Common myeloid progenitor, CD34-positive (primary cell): ENCODE measurements at regions of chr14 and their contacts with region 1.

Region 1: DNA sequence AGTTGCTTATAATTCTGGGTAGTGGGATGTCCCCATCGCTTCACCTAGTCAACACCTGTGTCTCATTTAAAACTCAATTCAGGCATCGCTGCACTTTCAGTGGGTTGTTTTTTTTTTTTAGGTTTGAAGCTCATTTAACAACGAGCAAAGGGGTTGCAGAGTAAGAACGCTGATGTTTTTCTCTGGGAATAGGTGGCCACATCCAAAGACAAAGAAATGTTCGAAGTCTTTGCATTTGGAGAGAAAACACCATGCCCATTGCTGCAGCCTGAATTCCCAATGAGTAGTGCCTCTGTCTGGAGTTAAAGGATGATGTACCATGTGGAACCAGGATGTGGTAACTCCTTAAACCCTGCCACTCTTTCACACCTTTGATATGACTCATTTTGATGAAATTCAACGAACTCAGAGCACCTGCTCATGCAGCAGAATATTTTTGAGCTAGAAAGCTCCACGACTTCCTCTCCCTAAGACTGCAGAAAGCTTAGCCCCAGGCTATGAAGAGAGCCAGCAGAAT is 35.1 kb upstream of the BATF start:
- DNase-seq: peak in 2 of 3 donors; percentile 27 to 39
- H3K4me3 ChIP-seq: no peak overlapping the region
- H3K27ac ChIP-seq: no peak overlapping the region
- H3K4me1 ChIP-seq: no peaks in the 10 kb centered on the region
- H3K27me3 ChIP-seq: no peaks in the 10 kb centered on the region

Region 2: DNA sequence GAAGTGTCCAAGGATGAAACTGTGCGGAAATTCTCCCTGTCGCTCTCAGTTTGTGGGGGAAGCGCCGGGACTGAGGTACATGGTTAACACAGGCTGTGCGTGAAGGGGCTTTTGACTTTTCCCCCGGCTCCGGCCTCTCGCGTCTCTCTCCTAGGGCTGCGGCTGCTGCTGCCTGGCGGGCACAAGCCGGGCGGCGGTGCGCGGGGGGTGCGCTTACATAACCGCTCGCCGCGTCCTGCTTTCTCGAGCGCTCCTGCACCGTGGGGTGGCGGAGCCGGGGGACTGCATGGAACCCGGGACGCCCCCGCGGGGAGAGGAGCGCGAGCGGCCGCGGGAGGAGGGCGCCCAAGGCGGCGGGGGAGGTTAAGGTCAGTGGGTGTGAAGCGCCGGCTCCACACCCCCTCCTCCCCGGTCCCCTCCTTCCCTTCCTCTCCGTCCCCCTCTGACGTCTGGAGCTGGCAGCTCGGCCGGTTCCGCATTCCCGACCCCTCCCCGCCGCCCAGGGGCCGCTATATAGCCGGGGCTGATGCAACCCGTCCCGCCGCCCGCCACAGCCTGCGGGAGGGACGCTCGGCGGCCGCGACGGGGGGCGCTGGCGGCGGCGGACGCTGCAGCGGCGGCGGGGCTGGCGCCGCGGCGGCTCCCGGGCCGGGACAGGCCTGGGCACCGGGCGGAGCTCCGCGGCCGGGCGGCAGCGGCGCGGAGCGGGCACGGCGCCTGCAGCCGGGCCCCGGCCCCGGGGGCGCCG is 59.6 kb before region 1 on chr14 and contains the start of gene JDP2:
- CTCF ChIA-PET with region 1: interaction called, 14 read pairs
- POLR2A ChIA-PET with region 1: no interaction called
- DNase-seq: peak; percentile 81 to 91 (median 90)
- H3K4me3 ChIP-seq: peak within 1 kb of the TSS; percentile 67 to 81 (median 74)
- H3K27ac ChIP-seq: peak within 1 kb of the TSS in 1 of 2 experiments; percentile 23
- H3K4me1 ChIP-seq: peaks cover 0 to 56% (median 32%) of the 10 kb centered on the region in 4 experiments
- H3K27me3 ChIP-seq: no peaks in the 10 kb centered on the region

Region 3: DNA sequence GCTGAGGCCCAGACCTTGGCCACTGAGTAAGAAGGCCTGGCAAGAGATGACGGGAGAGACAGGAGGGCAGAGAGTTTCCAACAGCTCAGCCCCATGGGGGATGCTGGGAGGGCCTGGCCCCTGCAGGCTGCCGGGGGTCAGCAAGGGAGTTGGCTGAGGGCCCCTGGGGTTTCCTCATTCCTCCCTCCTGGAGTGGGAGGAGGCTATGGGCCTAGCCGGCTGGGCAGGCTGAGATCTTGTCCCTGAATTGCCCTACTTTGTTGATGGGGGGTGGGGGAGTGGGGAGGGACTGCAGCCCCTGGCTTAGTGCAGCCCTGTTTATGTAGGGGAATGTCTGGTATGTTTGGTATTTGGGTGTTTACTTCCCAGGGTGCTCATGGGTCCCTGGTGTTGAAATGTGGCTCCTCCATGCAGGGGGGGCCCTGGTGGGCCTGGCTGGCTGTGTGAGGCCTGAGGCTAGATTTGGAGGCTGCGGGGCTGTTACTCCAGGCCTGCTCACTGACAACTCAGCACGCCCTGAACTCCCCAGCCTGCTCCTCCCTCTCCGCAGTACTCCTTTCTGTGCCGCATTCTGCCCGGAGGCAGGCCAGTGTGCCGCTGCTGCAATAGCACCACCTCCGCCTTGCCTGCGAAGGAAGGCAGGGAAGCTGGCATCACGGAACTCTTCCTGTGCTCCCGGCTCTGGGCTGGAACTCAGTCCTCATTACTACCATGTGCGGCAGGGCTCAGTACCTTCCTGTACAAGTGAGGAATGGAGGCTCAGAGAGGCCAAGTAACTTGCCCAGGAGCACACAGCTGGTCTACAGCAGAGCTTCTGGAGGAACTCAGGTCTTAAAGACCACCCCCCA is 34.1 kb before region 1 on chr14:
- CTCF ChIA-PET with region 1: interaction called, 17 read pairs
- POLR2A ChIA-PET with region 1: no interaction called
- DNase-seq: no peak
- H3K4me3 ChIP-seq: no peak overlapping the region
- H3K27ac ChIP-seq: no peak overlapping the region
- H3K4me1 ChIP-seq: peaks cover 4 to 83% (median 55%) of the 10 kb centered on the region in 4 experiments
- H3K27me3 ChIP-seq: no peaks in the 10 kb centered on the region

Region 4: GRCh38 chr14:75514673-75515628 is 27.7 kb after region 1 on chr14:
- CTCF ChIA-PET with region 1: interaction called, 14 read pairs
- POLR2A ChIA-PET with region 1: no interaction called
- DNase-seq: peak; percentile 67 to 91 (median 89)
- H3K4me3 ChIP-seq: peak overlapping the region in 6 of 7 experiments; percentile 17 to 65 (median 50)
- H3K27ac ChIP-seq: peak overlapping the region in 1 of 2 experiments; percentile 36
- H3K4me1 ChIP-seq: peaks cover 10 to 27% (median 19%) of the 10 kb centered on the region in 4 experiments
- H3K27me3 ChIP-seq: no peaks in the 10 kb centered on the region